PC-9 (cell line): ENCODE measurements at regions of chr2 and their contacts with region 1.

Region 1: DNA sequence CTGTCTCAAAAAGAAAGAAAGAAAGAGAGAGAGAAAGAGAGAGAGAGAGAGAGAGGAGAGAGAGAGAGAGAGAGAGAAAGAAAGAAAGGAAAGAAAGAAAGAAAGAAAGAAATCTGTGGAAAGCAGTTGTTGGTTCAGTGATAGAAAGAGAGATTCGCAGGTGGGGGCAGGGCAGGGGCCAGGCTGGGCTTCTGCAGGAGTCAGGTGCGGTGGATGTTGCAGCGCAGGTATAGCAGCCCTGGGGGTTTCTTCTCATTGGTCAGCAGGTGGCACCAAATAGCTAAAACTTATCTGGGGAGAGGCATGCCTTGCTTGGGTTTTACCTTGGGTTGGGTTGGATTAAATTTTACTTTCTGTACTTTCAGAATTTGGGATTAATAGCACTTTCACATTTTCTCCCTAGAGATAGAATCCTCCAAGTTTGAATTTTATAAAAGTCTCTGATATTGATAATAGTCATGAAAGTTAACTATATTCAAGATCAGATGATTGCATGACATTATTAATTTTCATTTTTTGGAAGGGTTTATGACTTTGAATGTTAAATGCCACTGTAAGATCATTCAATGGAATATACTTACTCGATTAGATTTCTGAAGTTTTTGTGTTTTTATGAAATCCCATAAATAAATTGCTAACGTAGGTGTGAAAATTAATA is 66.6 kb downstream of the SPTBN1 start:
- DNase-seq: peak; percentile 79 to 81
- H3K4me3 ChIP-seq: no peak overlapping the region
- H3K27ac ChIP-seq: no peak overlapping the region
- H3K4me1 ChIP-seq: peaks cover 19% of the 10 kb centered on the region
- H3K27me3 ChIP-seq: no peaks in the 10 kb centered on the region
- CTCF ChIP-seq: peak; percentile 90

Region 2: DNA sequence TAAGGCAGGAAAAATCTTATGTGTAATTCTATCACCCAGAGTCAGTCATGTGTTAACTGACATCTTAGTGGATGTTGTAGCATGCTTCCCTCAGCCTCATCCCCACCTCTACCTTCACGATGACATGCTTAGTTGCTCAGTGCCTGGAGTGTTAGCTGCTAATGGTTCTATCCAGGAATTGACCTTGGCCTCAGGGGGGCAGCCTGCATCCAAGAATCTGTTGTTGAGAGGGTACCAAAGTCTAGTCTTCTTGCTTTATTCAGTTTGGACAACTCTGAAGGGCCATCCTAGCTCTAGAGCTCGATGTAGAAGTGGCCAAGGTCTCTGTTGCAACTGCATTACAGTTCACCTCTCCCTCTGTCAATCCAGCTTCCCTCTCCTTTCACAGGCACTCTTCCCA is 346.2 kb before region 1 on chr2:
- CTCF ChIA-PET with region 1: no interaction called
- POLR2A ChIA-PET with region 1: no interaction called
- intact Hi-C with region 1: loop called (anchors 1 kb)
- DNase-seq: peak in 1 of 2 experiments; percentile 40
- H3K4me3 ChIP-seq: no peak overlapping the region
- H3K27ac ChIP-seq: no peak overlapping the region
- H3K4me1 ChIP-seq: no peaks in the 10 kb centered on the region
- H3K27me3 ChIP-seq: no peaks in the 10 kb centered on the region
- CTCF ChIP-seq: peak; percentile 46

Region 3: DNA sequence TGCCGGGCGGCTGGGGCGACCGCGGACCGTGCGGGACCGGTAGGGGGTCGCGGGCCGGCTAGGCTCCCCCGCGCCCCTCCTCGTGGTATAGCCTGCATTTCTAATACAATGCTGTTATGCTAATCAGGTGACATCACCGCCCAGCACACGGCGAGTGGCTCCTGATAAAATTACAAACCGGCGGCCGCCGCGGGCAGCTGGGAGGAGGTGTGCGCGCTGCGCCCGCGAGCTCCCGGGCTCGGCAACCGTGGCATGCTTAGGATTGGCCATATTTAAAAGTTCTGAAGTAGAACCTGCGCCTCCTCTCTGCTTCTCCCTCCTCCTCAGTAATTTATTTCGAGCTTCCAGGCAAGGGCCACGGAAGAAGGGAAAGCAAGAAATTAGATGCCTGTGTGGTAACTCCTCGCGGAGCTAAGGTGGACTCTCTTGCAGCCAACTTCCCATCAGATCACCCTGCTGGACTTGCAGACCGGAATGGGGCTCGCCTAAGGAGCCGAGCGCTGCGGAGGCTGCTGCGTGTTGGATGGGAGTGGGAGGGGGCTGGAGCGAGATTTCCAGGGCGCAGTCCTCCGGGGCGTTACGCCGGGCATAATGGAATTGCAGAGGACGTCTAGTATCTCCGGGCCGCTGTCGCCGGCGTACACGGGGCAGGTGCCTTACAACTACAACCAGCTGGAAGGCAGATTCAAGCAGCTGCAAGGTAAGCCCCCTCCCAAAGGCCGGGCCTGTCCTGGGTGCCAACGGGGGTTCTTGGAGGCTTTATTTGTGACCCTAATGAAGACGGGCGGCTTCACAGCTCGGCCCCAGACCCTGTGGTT is 35.6 kb after region 1 on chr2:
- CTCF ChIA-PET with region 1: interaction called, 6 read pairs
- POLR2A ChIA-PET with region 1: interaction called, 53 read pairs
- intact Hi-C with region 1: loop called (anchors 1 kb)
- DNase-seq: peak; percentile 72 to 73
- H3K4me3 ChIP-seq: peak overlapping the region; percentile 90
- H3K27ac ChIP-seq: peak overlapping the region; percentile 95
- H3K4me1 ChIP-seq: peaks cover 49% of the 10 kb centered on the region
- H3K27me3 ChIP-seq: no peaks in the 10 kb centered on the region
- CTCF ChIP-seq: no peak

Region 4: GRCh38 chr2:54597153-54597848 is 74.5 kb after region 1 on chr2:
- CTCF ChIA-PET with region 1: interaction called, 4 read pairs
- POLR2A ChIA-PET with region 1: no interaction called
- intact Hi-C with region 1: loop called (anchors 1 kb)
- DNase-seq: no peak
- H3K4me3 ChIP-seq: no peak overlapping the region
- H3K27ac ChIP-seq: no peak overlapping the region
- H3K4me1 ChIP-seq: no peaks in the 10 kb centered on the region
- H3K27me3 ChIP-seq: no peaks in the 10 kb centered on the region
- CTCF ChIP-seq: no peak

Region 5: GRCh38 chr2:54652540-54652939 is 129.8 kb after region 1 on chr2:
- CTCF ChIA-PET with region 1: no interaction called
- POLR2A ChIA-PET with region 1: no interaction called
- intact Hi-C with region 1: loop called (anchors 5 kb)
- DNase-seq: no peak
- H3K4me3 ChIP-seq: no peak overlapping the region
- H3K27ac ChIP-seq: no peak overlapping the region
- H3K4me1 ChIP-seq: no peaks in the 10 kb centered on the region
- H3K27me3 ChIP-seq: no peaks in the 10 kb centered on the region
- CTCF ChIP-seq: no peak

Region 6: DNA sequence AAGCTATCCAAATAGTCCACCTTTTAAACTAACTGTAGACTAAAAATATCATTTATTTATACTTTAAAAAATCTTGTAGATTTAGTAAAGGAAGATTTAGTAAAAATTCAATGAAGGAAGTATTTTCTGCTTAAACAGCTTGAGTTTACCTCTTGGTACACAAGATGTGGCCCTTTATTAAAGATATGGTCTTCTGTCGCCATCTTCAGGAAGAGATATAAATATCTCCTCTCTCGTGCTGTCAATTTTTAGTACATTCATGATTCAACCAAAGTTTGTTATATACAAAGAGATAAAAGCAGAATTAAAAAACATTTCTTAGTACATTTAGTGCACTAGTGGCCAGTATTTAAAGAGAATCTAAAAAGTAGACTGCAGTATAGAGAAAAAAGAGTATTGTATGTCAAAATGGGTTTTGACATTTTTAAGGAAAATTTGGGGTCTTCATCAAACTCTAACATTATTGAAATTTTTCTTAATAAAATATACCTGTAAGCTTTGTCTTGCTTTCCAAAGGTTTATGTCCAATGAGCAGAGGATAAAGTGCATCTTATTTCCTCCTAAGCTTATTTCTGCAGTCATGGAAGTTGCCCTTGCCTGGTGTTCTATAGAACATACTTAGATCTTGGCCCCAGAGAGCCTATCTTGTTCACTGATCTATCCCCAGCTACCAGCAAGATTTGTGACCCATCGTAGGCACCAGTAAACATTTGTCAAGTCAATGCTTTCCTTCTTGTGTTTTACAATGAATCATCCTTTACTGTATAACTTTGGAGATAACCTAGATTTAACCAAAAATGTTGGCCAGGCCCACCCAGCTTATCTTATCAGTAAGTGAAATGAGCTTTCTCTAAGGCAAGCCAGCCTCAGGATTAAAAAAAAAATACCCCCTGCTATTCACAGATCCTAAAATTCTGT is 182.2 kb after region 1 on chr2:
- CTCF ChIA-PET with region 1: interaction called, 6 read pairs
- POLR2A ChIA-PET with region 1: no interaction called
- intact Hi-C with region 1: loop called (anchors 1 kb)
- DNase-seq: peak in 1 of 2 experiments; percentile 52
- H3K4me3 ChIP-seq: no peak overlapping the region
- H3K27ac ChIP-seq: no peak overlapping the region
- H3K4me1 ChIP-seq: no peaks in the 10 kb centered on the region
- H3K27me3 ChIP-seq: no peaks in the 10 kb centered on the region
- CTCF ChIP-seq: peak; percentile 91

Region 7: DNA sequence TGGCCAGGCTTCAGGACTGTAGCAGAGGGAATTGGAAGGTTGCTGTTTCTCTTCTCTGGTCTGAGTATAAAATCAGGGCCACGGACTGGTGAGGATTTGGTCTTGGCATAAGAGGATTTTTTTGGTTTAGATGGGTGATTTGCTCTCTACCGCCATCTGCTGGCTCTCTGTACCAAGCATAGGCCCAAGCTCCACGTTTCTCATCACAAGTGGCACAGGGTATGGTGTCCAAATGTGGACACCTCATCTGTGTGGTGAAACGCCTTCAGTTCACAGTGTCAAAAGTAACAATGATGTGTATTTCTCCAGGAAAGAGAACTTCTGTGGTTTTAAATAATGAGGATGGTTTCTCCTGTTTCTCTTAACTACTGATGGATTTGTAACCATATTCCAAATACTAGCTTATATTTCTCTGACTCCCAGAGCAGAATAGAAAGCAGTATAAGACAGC is 315.9 kb after region 1 on chr2:
- CTCF ChIA-PET with region 1: no interaction called
- POLR2A ChIA-PET with region 1: no interaction called
- intact Hi-C with region 1: loop called (anchors 10 kb)
- DNase-seq: peak; percentile 50 to 63
- H3K4me3 ChIP-seq: no peak overlapping the region
- H3K27ac ChIP-seq: no peak overlapping the region
- H3K4me1 ChIP-seq: no peaks in the 10 kb centered on the region
- H3K27me3 ChIP-seq: no peaks in the 10 kb centered on the region
- CTCF ChIP-seq: peak; percentile 98